ENCODE measurements at regions of chr11 and their contacts with region 1.

Region 1: GRCh38 chr11:95521133-95521542 is 268.4 kb downstream of the FAM76B start:
- DNase-seq: peak; percentile 93
- H3K4me3 ChIP-seq: no peak overlapping the region
- H3K27ac ChIP-seq: peak overlapping the region; percentile 87
- H3K4me1 ChIP-seq: peaks cover 48% of the 10 kb centered on the region
- H3K27me3 ChIP-seq: no peaks in the 10 kb centered on the region
- CTCF ChIP-seq: no peak

Region 2: GRCh38 chr11:95284057-95285052 is 236.8 kb before region 1 on chr11:
- CTCF ChIA-PET with region 1: no interaction called
- dilution Hi-C with region 1: no loop called
- in situ Hi-C with region 1: no loop called
- intact Hi-C with region 1: loop called (anchors 5 kb)
- DNase-seq: peak; percentile 36
- H3K4me3 ChIP-seq: no peak overlapping the region
- H3K27ac ChIP-seq: no peak overlapping the region
- H3K4me1 ChIP-seq: peaks cover 26% of the 10 kb centered on the region
- H3K27me3 ChIP-seq: no peaks in the 10 kb centered on the region
- CTCF ChIP-seq: no peak

Region 3: GRCh38 chr11:95863486-95864140 is 342.5 kb after region 1 on chr11:
- CTCF ChIA-PET with region 1: no interaction called
- dilution Hi-C with region 1: no loop called
- in situ Hi-C with region 1: no loop called
- intact Hi-C with region 1: no loop called
- DNase-seq: no peak
- H3K4me3 ChIP-seq: no peak overlapping the region
- H3K27ac ChIP-seq: no peak overlapping the region
- H3K4me1 ChIP-seq: no peaks in the 10 kb centered on the region
- H3K27me3 ChIP-seq: no peaks in the 10 kb centered on the region
- CTCF ChIP-seq: no peak